Activated CD4-positive, alpha-beta T cell treated with anti-CD3 and anti-CD28 coated beads, Interleukin-2, amount 10 ng/mL, durations not matched to agents 24 days and 14 days (primary cell): ENCODE measurements at regions of chr22 and their contacts with region 1.

Region 1: DNA sequence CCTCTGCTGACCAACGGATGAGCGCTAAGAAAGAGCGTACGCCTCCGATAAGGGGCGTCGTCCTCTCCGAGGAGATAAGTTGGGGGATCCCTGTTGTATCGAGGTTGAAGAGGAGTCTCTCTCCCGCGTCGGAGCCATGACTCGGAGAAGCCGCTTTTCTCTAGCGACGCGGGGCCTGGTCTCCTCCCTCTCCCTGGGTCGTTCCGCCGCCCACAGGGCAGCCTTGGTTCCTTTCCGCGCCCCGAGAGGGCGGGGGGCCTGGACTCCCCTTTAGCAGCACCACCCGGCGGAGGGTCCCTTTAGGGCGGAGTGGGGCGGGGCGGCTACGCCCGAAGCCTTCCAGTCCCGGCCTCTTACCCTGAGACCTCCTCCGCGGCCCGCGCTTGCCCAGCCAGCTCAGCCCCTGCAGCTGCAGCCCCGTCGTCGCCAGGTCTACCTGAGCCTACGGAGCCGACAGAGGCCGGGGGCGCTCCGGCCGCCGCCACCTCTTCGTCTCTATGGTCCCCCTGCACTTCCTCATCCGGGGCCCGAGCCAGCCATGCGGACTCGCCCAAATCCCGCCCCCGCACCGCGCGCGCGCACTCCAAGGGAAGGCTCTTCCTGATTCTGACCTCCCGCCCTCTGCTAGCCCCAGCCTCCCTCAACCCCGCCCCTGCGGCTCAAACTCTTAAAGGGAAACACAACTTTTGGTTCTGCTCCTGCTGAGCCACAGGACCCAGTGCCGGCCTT is at the start of gene PRR14L:
- DNase-seq: peak; percentile 100
- H3K4me3 Mint-ChIP-seq: peak within 1 kb of the TSS; percentile 99
- H3K27ac Mint-ChIP-seq: peak within 1 kb of the TSS; percentile 96
- H3K4me1 Mint-ChIP-seq: peaks cover 48% of the 10 kb centered on the region
- H3K27me3 Mint-ChIP-seq: peaks cover 2% of the 10 kb centered on the region
- total RNA-seq, gene PRR14L: 61.0 and 63.6 TPM in 2 replicates

Region 2: DNA sequence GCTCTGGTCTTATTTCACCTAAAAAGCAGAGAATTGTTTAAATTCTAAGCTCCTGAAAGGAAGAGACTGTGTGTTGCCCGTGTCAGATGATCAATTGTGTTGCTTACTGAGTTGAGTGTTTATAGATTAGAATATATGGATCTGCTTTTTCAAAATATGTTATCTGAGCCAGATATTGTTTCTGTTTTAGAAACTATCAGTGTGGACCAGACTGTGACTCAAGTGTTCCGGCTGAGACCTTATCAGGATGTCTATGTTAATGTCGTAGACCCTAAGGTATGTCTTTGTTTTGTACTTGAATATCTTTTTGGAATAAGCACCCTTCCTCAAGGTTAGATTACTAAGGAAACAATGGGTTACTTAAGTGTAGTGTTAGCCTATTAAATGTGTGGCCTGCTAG is 15.0 kb after region 1 on chr22:
- intact Hi-C with region 1: no loop called
- DNase-seq: no peak
- H3K4me3 Mint-ChIP-seq: no peak overlapping the region
- H3K27ac Mint-ChIP-seq: no peak overlapping the region
- H3K4me1 Mint-ChIP-seq: no peaks in the 10 kb centered on the region
- H3K27me3 Mint-ChIP-seq: no peaks in the 10 kb centered on the region

Region 3: GRCh38 chr22:31943976-31944699 is 194.3 kb after region 1 on chr22 and contains the start of gene YWHAH:
- intact Hi-C with region 1: loop called (anchors 1 kb)
- DNase-seq: peak; percentile 96
- H3K4me3 Mint-ChIP-seq: no peak within 1 kb of the TSS
- H3K27ac Mint-ChIP-seq: peak within 1 kb of the TSS; percentile 98
- H3K4me1 Mint-ChIP-seq: peaks cover 21% of the 10 kb centered on the region
- H3K27me3 Mint-ChIP-seq: no peaks in the 10 kb centered on the region
- total RNA-seq, gene YWHAH: 138 and 141 TPM in 2 replicates